ENCODE measurements at regions of chr1 and their contacts with region 1.

Region 1: GRCh38 chr1:15902882-15903281 is 55.4 kb downstream of the SPEN start:
- DNase-seq: no peak
- ATAC-seq: no peak
- H3K4me3 ChIP-seq: no peak overlapping the region
- H3K4me3 Mint-ChIP-seq: no peak overlapping the region
- H3K27ac ChIP-seq: no peak overlapping the region
- H3K27ac Mint-ChIP-seq: peak overlapping the region in 1 of 2 donors; percentile 34
- H3K4me1 ChIP-seq: peaks cover 0 to 3% of the 10 kb centered on the region in 2 experiments
- H3K4me1 Mint-ChIP-seq: peaks cover 36 to 39% (median 37%) of the 10 kb centered on the region in 3 donors
- H3K27me3 ChIP-seq: no peaks in the 10 kb centered on the region
- H3K27me3 Mint-ChIP-seq: no peaks in the 10 kb centered on the region

Region 2: DNA sequence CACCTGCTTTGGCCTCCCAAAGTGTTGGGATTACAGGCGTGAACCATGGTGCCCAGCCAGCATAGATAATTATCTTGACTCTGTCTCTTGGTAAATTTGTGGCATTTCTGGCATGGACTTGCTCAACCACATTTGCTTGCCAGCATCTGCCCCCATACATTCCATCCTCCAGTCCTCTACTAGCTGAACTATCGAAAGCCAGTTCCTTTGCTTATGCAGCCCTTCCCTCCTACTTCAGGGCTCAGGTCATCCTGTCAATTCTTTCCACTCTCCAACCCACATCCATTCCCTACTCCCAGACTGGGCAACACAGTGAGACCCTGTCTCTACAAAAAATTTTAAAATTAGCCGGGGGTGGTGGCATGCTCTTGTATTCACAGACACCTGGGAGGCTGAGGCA is 82.4 kb before region 1 on chr1:
- CTCF ChIA-PET with region 1: interaction called, 4 to 10 read pairs
- POLR2A ChIA-PET with region 1: interaction called in 1 of 2 experiments, 7 read pairs
- DNase-seq: no peak
- ATAC-seq: no peak
- H3K4me3 ChIP-seq: no peak overlapping the region
- H3K4me3 Mint-ChIP-seq: no peak overlapping the region
- H3K27ac ChIP-seq: no peak overlapping the region
- H3K27ac Mint-ChIP-seq: no peak overlapping the region
- H3K4me1 ChIP-seq: no peaks in the 10 kb centered on the region
- H3K4me1 Mint-ChIP-seq: peaks cover 3 to 6% (median 4%) of the 10 kb centered on the region in 3 donors
- H3K27me3 ChIP-seq: no peaks in the 10 kb centered on the region
- H3K27me3 Mint-ChIP-seq: no peaks in the 10 kb centered on the region

Region 3: DNA sequence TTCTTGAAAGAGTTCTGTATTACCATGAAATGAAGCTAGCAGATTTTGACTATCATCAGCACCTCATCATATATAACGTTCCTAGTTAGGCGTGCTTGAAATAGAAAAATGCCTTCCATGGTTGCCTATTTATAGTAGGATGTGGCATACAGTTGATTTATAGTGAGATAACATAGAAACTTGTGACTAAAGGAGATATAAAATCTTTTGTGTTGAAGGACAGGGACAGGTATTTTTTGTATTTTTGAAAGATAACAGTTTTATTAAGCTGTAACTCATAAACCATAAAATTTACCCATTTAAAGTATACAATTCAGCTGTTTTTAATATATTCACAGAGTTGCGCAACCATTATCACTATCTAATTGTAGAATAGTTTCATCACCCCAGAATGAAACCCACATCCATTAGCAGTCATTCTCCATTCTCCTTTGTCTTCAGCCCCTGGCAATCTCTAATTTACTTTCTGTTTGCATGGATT is 36.1 kb before region 1 on chr1:
- CTCF ChIA-PET with region 1: interaction called in 1 of 2 experiments, 5 read pairs
- POLR2A ChIA-PET with region 1: interaction called in 1 of 2 experiments, 12 read pairs
- DNase-seq: no peak
- ATAC-seq: no peak
- H3K4me3 ChIP-seq: no peak overlapping the region
- H3K4me3 Mint-ChIP-seq: no peak overlapping the region
- H3K27ac ChIP-seq: no peak overlapping the region
- H3K27ac Mint-ChIP-seq: no peak overlapping the region
- H3K4me1 ChIP-seq: peaks cover 2 to 25% of the 10 kb centered on the region in 2 experiments
- H3K4me1 Mint-ChIP-seq: peaks cover 58 to 65% (median 62%) of the 10 kb centered on the region in 3 donors
- H3K27me3 ChIP-seq: no peaks in the 10 kb centered on the region
- H3K27me3 Mint-ChIP-seq: no peaks in the 10 kb centered on the region

Region 4: GRCh38 chr1:15916417-15916816 is 13.5 kb after region 1 on chr1:
- CTCF ChIA-PET with region 1: no interaction called
- POLR2A ChIA-PET with region 1: no interaction called
- DNase-seq: peak in 1 of 35 experiments; percentile 8
- ATAC-seq: peak in 1 of 4 experiments; percentile 10
- H3K4me3 ChIP-seq: peak overlapping the region in 1 of 2 donors; percentile 9
- H3K4me3 Mint-ChIP-seq: peak overlapping the region; percentile 39 to 72 (median 48)
- H3K27ac ChIP-seq: no peak overlapping the region
- H3K27ac Mint-ChIP-seq: peak overlapping the region; percentile 62 to 73
- H3K4me1 ChIP-seq: peaks cover 0 to 12% of the 10 kb centered on the region in 2 experiments
- H3K4me1 Mint-ChIP-seq: peaks cover 36 to 44% (median 42%) of the 10 kb centered on the region in 3 donors
- H3K27me3 ChIP-seq: no peaks in the 10 kb centered on the region
- H3K27me3 Mint-ChIP-seq: no peaks in the 10 kb centered on the region

Region 5: DNA sequence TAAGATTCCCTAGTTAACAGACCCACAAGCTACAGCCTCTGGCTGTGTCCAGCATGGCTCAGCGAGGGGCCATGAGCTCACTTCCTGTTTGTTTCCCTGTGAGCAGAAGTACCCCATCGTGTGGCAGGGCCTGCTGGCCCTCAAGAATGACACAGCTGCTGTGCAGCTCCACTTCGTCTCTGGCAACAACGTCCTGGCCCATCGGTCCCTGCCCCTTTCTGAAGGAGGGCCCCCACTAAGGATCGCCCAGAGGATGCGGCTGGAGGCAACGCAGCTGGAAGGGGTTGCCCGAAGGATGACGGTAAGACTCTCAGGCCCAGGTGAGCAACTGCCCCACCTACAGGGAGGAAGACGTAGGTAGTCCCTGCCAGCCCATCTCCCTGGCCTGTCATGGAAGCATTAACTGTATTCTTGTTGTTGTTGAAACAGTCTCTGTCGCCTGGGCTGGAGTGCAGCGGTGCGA is 34.9 kb after region 1 on chr1:
- CTCF ChIA-PET with region 1: no interaction called
- POLR2A ChIA-PET with region 1: no interaction called
- DNase-seq: no peak
- ATAC-seq: no peak
- H3K4me3 ChIP-seq: no peak overlapping the region
- H3K4me3 Mint-ChIP-seq: no peak overlapping the region
- H3K27ac ChIP-seq: no peak overlapping the region
- H3K27ac Mint-ChIP-seq: peak overlapping the region; percentile 73 to 79
- H3K4me1 ChIP-seq: no peaks in the 10 kb centered on the region
- H3K4me1 Mint-ChIP-seq: no peaks in the 10 kb centered on the region
- H3K27me3 ChIP-seq: no peaks in the 10 kb centered on the region
- H3K27me3 Mint-ChIP-seq: no peaks in the 10 kb centered on the region